ENCODE measurements at regions of chr1 and their contacts with region 1.

Region 1: GRCh38 chr1:11645670-11646265 is 8.5 kb downstream of the FBXO2 start:
- DNase-seq: peak; percentile 80
- H3K4me3 ChIP-seq: no peak overlapping the region
- H3K27ac ChIP-seq: no peak overlapping the region
- H3K4me1 ChIP-seq: peaks cover 29% of the 10 kb centered on the region
- H3K27me3 ChIP-seq: no peaks in the 10 kb centered on the region
- CTCF ChIP-seq: peak; percentile 38 to 69 (median 45)
- POLR2A ChIP-seq: no peak

Region 2: GRCh38 chr1:11045428-11046269 is 600.1 kb before region 1 on chr1:
- intact Hi-C with region 1: loop called (anchors 10 kb)
- DNase-seq: no peak
- H3K4me3 ChIP-seq: no peak overlapping the region
- H3K27ac ChIP-seq: no peak overlapping the region
- H3K4me1 ChIP-seq: no peaks in the 10 kb centered on the region
- H3K27me3 ChIP-seq: no peaks in the 10 kb centered on the region
- CTCF ChIP-seq: no peak
- POLR2A ChIP-seq: no peak

Region 3: GRCh38 chr1:11252538-11252937 is 393.2 kb before region 1 on chr1:
- intact Hi-C with region 1: loop called (anchors 10 kb)
- DNase-seq: no peak
- H3K4me3 ChIP-seq: no peak overlapping the region
- H3K27ac ChIP-seq: no peak overlapping the region
- H3K4me1 ChIP-seq: no peaks in the 10 kb centered on the region
- H3K27me3 ChIP-seq: no peaks in the 10 kb centered on the region
- CTCF ChIP-seq: no peak
- POLR2A ChIP-seq: no peak

Region 4: GRCh38 chr1:11522400-11523235 is 123.2 kb before region 1 on chr1:
- intact Hi-C with region 1: no loop called
- DNase-seq: no peak
- H3K4me3 ChIP-seq: no peak overlapping the region
- H3K27ac ChIP-seq: no peak overlapping the region
- H3K4me1 ChIP-seq: no peaks in the 10 kb centered on the region
- H3K27me3 ChIP-seq: no peaks in the 10 kb centered on the region
- CTCF ChIP-seq: no peak
- POLR2A ChIP-seq: no peak

Measured in testis (tissue), 5 donors.